PC-9 (cell line): ENCODE measurements at regions of chr4 and their contacts with region 1.

Region 1: DNA sequence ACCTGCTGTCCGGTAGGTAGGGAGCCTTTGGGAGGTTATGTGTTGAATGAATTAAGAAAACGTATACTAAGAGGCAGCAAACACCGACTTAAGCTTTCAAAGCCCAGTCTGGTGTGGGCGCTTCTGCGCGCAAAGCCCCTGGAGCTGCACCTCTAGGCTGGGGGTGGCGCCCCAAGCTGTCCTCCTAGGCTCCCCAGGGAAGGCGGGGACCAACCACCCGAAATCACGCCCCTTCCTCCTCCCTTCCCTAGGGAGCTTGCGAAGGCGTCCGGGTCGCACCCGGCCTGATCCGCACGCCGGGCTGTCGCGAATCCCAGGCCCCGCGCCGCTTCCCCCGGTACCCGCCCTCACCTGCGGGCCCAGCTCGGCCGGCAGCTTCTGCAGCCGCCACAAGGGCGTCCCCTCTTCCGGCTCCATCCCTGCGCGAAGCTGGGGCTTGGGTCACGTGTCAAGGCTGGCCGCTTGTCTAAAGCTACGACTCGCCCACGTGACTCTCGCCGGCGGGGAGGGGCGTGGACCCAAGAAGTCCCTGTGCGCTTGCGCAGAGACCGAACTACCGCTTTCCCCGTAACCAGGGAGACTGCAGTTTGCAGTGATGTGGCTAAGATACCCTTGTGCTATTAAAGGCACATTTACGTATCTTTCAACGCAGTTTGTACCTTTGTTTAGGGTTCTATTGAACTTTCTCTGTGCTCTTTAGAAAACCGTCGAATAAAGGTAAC is at the start of gene COMMD8:
- DNase-seq: peak; percentile 90 to 93
- H3K4me3 ChIP-seq: peak within 1 kb of the TSS; percentile 80
- H3K27ac ChIP-seq: peak within 1 kb of the TSS; percentile 32
- H3K4me1 ChIP-seq: peaks cover 17% of the 10 kb centered on the region
- H3K27me3 ChIP-seq: no peaks in the 10 kb centered on the region
- CTCF ChIP-seq: no peak
- total RNA-seq, gene COMMD8: 22.7 and 27.4 TPM in 2 replicates

Region 2: GRCh38 chr4:47531241-47531953 is 68.0 kb after region 1 on chr4:
- CTCF ChIA-PET with region 1: no interaction called
- POLR2A ChIA-PET with region 1: no interaction called
- intact Hi-C with region 1: loop called (anchors 2 kb)
- DNase-seq: peak; percentile 45 to 85
- H3K4me3 ChIP-seq: no peak overlapping the region
- H3K27ac ChIP-seq: peak overlapping the region; percentile 66
- H3K4me1 ChIP-seq: peaks cover 22% of the 10 kb centered on the region
- H3K27me3 ChIP-seq: no peaks in the 10 kb centered on the region
- CTCF ChIP-seq: no peak

Region 3: GRCh38 chr4:47562297-47562696 is 98.9 kb after region 1 on chr4:
- CTCF ChIA-PET with region 1: interaction called, 4 read pairs
- POLR2A ChIA-PET with region 1: no interaction called
- intact Hi-C with region 1: loop called (anchors 2 kb)
- DNase-seq: no peak
- H3K4me3 ChIP-seq: no peak overlapping the region
- H3K27ac ChIP-seq: no peak overlapping the region
- H3K4me1 ChIP-seq: peaks cover 36% of the 10 kb centered on the region
- H3K27me3 ChIP-seq: no peaks in the 10 kb centered on the region
- CTCF ChIP-seq: no peak